ENCODE measurements at regions of chr19 and their contacts with region 1.

Region 1: GRCh38 chr19:12881172-12881808 is at the start of gene DNASE2:
- DNase-seq: peak; percentile 93 to 95
- H3K4me3 ChIP-seq: peak within 1 kb of the TSS; percentile 77
- H3K27ac ChIP-seq: peak within 1 kb of the TSS; percentile 66
- H3K4me1 ChIP-seq: peaks cover 14% of the 10 kb centered on the region
- H3K27me3 ChIP-seq: no peaks in the 10 kb centered on the region
- CTCF ChIP-seq: no peak
- total RNA-seq, gene DNASE2: 68.4 and 81.0 TPM in 2 replicates

Region 2: DNA sequence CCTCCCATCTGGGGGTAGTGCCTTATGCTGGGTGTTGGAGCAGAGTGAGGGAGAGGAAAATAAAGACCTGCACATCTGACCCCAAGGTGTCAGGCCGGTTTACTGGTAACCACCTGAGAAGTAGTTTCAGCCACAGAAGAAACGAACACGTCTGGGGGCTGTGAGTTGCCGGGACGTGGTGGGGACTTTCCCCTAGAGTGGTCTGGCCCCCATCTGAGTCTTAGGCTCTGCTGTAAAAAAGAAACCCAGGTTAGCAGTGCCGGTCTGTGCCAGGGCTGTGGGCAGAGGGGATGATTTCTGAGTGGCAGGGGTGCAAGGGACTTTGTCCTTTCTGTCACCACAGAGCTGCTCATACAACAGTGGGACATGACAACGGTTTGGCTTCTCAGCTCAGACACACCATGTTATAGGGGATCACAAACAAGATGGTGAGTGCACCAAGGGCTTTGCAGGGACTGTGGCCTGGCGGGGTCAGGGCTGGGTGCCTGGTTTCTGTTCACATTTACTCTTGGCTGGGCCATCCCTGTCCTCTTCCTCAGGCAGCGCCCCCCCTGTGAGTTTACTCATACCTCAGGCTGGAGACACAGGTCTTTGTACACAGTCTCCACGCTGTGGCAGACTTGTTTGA is 18.7 kb after region 1 on chr19:
- CTCF ChIA-PET with region 1: interaction called, 6 read pairs
- POLR2A ChIA-PET with region 1: interaction called, 10 read pairs
- intact Hi-C with region 1: no loop called
- DNase-seq: no peak
- H3K4me3 ChIP-seq: no peak overlapping the region
- H3K27ac ChIP-seq: no peak overlapping the region
- H3K4me1 ChIP-seq: no peaks in the 10 kb centered on the region
- H3K27me3 ChIP-seq: no peaks in the 10 kb centered on the region
- CTCF ChIP-seq: no peak

Region 3: GRCh38 chr19:12913011-12913561 is 31.8 kb after region 1 on chr19:
- CTCF ChIA-PET with region 1: interaction called, 18 read pairs
- POLR2A ChIA-PET with region 1: no interaction called
- intact Hi-C with region 1: no loop called
- DNase-seq: no peak
- H3K4me3 ChIP-seq: no peak overlapping the region
- H3K27ac ChIP-seq: no peak overlapping the region
- H3K4me1 ChIP-seq: no peaks in the 10 kb centered on the region
- H3K27me3 ChIP-seq: no peaks in the 10 kb centered on the region
- CTCF ChIP-seq: no peak

Region 4: GRCh38 chr19:12965017-12965811 is 83.9 kb after region 1 on chr19:
- CTCF ChIA-PET with region 1: interaction called, 5 read pairs
- POLR2A ChIA-PET with region 1: interaction called, 5 read pairs
- intact Hi-C with region 1: loop called (anchors 2 kb)
- DNase-seq: peak; percentile 63 to 86
- H3K4me3 ChIP-seq: peak overlapping the region; percentile 58
- H3K27ac ChIP-seq: no peak overlapping the region
- H3K4me1 ChIP-seq: no peaks in the 10 kb centered on the region; the same call in 1 of the 2 replicates
- H3K27me3 ChIP-seq: no peaks in the 10 kb centered on the region
- CTCF ChIP-seq: peak; percentile 96

Measured in PC-9 (cell line).